Astrocyte of the cerebellum (primary cell): ENCODE measurements at regions of chr15 and their contacts with region 1.

Region 1: DNA sequence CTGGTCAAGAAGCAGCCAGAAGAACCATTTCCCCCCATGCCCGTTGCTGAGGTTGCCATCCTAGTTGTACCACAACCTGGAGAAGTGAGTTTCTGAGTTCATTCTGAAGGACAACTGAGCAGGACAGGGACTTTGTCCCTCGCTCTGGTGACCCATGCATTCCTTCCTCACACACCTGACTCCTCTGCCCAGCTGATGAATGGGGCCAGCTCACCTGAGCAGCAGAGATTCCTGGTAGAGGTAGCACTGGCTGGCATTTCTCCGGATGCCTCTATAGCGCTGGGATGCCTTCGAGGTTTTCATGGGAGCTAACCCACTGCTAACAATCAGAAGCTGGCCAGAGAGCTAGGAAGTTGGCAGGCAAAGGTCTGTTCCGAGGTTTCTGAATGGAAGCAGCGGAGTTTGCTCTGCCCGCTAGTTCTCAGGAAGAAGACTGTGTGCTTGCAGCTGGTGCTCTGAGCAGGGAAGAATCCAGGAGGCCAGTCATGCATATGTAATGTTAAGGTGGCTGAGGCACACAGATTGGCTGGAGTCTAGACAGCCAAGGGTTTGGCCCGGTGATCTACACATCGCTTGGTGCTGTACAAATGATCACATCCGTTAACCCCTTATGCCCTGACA is at the start of gene TMC3:
- DNase-seq: peak; percentile 64
- H3K4me3 ChIP-seq: no peak within 1 kb of the TSS
- CTCF ChIP-seq: no peak

Region 2: DNA sequence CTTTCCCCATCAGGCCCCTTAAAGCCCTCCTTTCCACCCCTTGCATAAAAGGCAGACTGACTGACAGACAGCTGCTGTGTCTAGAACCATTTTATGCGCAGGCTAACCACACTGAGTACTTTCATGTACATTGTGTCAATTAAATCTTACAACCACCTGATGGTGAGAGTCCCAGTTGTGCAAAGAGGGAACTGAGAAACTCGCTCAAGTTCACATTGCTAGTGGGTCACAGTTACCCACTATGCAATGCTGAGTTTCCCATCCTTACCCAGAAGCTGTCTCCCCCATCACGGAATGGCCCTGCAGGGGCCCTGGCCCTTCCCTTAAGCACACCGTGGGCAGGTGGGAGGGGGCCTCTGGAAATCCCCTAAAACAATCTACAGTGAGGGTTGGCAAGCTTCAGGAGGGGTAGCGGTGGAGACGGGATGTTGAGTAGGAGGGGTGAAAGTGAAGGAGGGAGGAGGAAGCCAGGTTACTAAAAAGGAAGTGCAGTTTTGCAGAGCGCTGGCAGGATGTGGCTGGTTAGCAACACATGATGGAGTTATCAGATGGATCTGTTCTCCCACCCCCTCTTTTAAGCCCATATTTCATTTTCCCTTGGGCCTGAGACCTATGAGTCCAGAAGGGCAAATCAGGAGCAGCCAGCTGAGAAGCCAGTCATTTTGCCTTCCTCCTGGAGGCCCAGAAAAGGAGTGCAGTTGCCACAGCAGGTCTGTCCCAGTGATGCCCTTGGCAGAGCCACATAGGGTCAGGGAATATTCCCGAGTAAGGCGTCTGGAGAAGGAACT is 80.0 kb before region 1 on chr15:
- in situ Hi-C with region 1: loop called (anchors 5 kb)
- DNase-seq: no peak
- H3K4me3 ChIP-seq: no peak overlapping the region
- CTCF ChIP-seq: no peak

Region 3: DNA sequence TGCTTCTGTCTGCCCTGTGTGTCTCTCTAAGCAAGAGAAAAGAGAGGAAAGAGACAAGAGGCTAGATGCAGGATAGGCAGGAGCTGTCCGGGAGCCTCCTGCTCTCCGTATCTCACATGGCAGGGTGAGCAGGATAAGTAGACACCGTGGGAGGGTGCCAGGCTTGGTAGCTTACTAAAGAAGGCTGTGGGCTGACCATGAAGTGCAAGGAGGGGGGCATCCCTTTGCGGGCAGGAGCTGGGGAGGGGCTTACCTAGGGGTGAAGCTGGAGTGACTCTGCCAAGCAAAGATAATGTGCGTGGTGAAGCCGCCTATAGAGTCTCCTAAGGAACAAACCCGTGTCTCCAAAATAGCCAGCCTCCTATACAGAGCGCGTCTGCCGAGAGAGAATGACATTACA is 33.8 kb after region 1 on chr15:
- in situ Hi-C with region 1: loop called (anchors 5 kb)
- DNase-seq: no peak
- H3K4me3 ChIP-seq: no peak overlapping the region
- CTCF ChIP-seq: no peak

Region 4: GRCh38 chr15:81633889-81634288 is 260.0 kb after region 1 on chr15:
- in situ Hi-C with region 1: no loop called
- DNase-seq: no peak
- H3K4me3 ChIP-seq: no peak overlapping the region
- CTCF ChIP-seq: no peak